Panc1 (cell line): ENCODE measurements at regions of chr11 and their contacts with region 1.

Region 1: DNA sequence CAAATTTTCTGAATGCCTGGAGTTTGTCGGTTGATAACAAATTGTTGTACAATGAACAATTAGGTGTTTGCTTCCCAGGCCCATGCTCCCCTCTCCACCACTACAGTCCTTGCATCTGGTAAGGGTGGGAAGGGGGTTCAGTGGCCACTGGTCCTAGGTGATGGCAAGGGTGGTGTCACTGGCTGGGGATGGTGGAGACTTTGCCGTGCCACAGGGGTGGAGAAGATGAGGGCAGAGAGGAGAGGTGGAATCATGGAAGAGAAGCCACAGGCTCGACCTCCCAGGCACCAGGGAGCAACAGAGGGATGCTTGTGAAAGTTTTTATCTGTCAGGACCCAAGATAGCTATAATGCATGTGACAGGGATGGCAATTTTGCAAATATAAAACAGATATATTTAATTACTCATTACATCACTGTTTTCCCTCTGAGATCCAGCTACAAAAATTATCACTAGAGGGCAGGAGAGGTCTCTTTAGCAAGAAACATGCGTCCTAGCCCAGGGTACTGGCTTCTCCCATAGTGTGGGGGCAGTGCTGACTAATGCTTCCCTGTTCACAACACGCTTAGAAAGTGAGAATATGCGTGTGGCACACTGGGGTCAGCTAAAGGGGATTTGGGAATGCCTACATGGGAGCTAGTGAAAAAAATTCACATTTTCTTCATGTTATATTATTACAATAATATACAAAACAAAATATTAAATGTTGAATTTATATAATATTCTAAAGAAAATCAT is 49.0 kb upstream of the AMPD3 start:
- DNase-seq: peak; percentile 84
- ATAC-seq: peak; percentile 91
- H3K4me3 ChIP-seq: no peak overlapping the region
- H3K27ac ChIP-seq: peak overlapping the region; percentile 4; the same call in 1 of the 2 replicates
- H3K4me1 ChIP-seq: peaks cover 18% of the 10 kb centered on the region
- H3K27me3 ChIP-seq: no peaks in the 10 kb centered on the region
- CTCF ChIP-seq: peak; percentile 96

Region 2: DNA sequence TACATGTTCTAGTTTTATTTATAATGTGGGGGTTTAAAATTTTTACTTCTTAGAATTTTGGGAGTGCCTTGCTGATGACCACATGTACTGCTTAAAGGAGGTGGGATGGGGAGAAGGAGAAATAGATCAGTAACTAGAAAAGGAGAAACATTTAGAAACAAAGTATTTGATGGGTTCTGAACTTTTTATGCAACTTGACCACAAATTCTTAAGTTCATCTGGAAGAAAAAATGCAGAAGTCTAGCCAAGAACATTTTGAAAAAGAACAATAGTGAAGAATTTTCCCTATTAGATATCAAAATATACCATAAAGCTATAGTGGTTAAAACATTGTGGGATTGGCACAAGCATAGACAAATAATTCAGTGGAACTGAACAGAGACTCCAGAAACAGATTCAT is 24.3 kb before region 1 on chr11:
- CTCF ChIA-PET with region 1: no interaction called
- POLR2A ChIA-PET with region 1: interaction called, 13 read pairs
- in situ Hi-C with region 1: no loop called
- intact Hi-C with region 1: no loop called
- DNase-seq: no peak
- ATAC-seq: no peak
- H3K4me3 ChIP-seq: no peak overlapping the region
- H3K27ac ChIP-seq: no peak overlapping the region
- H3K4me1 ChIP-seq: no peaks in the 10 kb centered on the region
- H3K27me3 ChIP-seq: no peaks in the 10 kb centered on the region; the same call in 1 of the 2 replicates
- CTCF ChIP-seq: no peak

Region 3: DNA sequence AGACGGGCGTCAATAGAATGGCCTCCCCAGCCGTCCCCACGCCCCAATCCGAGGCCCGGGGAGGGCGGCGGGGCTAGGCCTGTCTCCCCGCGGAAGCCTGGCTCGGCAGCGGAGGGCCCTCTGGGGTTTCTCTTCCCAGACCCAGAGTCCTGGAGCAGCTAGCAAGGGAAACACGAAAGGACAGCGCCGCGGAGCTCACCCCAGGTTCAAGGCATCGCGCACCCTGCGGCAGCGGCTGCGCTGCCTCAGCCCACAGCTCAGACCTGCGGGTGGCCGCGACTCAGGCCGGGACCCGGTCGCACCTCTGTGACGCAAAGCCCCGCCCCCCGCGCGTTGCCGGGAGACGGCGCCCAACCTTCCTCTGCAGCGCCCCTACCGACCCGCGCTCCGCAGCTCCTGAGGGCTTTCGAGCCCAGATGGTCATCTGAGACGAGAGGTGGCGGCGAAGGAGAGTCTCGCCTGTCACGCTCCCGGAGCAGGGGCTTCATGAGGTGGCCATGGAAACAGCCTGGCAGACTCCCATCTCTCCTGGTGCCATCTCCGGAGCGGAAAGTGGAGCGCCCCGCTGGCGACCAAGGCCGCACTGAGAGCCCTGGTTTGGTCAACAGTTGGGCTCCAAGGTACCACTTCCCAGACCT is 135.0 kb after region 1 on chr11 and contains the start of gene RNF141:
- CTCF ChIA-PET with region 1: interaction called, 5 read pairs
- POLR2A ChIA-PET with region 1: no interaction called
- in situ Hi-C with region 1: no loop called
- intact Hi-C with region 1: loop called (anchors 10 kb)
- DNase-seq: peak; percentile 82
- ATAC-seq: peak; percentile 98
- H3K4me3 ChIP-seq: peak within 1 kb of the TSS; percentile 76 to 88
- H3K27ac ChIP-seq: peak within 1 kb of the TSS; percentile 81
- H3K4me1 ChIP-seq: peaks cover 21% of the 10 kb centered on the region
- H3K27me3 ChIP-seq: no peaks in the 10 kb centered on the region
- CTCF ChIP-seq: peak; percentile 99
- total RNA-seq, gene RNF141: 35.8 TPM

Region 4: GRCh38 chr11:10657308-10658271 is 251.6 kb after region 1 on chr11:
- CTCF ChIA-PET with region 1: no interaction called
- POLR2A ChIA-PET with region 1: no interaction called
- in situ Hi-C with region 1: no loop called
- intact Hi-C with region 1: loop called (anchors 5 kb)
- DNase-seq: no peak
- ATAC-seq: peak; percentile 28
- H3K4me3 ChIP-seq: no peak overlapping the region
- H3K27ac ChIP-seq: peak overlapping the region; percentile 74
- H3K4me1 ChIP-seq: peaks cover 29% of the 10 kb centered on the region
- H3K27me3 ChIP-seq: no peaks in the 10 kb centered on the region
- CTCF ChIP-seq: no peak

Region 5: DNA sequence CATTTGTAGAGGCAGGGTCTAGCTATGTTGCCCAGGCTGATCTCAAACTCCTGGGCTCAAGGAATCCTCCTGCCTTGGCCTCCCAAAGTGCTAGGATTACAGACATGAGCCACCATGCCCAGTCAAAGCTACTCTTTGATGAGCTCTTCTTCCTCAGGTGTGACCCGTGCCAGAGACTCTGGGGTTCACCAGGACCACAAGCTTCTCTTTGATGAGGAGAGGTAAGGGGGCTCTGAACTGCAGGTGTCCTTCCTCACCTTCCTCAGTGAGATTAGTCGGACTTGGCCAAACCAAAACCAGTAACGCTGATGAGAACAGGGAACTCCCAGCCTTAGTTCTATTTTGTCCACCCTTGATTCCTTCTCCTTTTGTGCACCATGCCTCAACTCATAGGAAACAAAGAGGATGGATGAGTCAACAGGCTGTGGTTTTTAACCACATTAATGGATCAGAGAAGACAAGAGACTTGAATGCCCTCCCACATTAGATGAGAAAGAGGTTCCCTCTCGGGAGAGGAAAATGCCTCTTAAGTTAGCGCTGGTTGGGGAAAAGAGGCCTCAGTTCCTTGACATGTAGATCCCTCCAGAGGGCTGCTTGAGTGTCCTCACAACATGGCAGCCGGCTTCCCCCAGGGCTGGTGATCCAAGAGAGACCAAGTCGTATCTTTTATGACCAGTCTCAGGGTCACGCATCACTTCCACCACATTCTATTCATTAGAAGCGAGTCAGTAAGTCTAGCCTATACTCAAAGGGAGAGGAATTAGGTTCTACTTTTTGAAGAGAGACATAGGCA is 319.3 kb after region 1 on chr11:
- CTCF ChIA-PET with region 1: interaction called, 10 read pairs
- POLR2A ChIA-PET with region 1: no interaction called
- in situ Hi-C with region 1: no loop called
- intact Hi-C with region 1: no loop called
- DNase-seq: no peak
- ATAC-seq: no peak
- H3K4me3 ChIP-seq: no peak overlapping the region
- H3K27ac ChIP-seq: no peak overlapping the region
- H3K4me1 ChIP-seq: no peaks in the 10 kb centered on the region
- H3K27me3 ChIP-seq: no peaks in the 10 kb centered on the region
- CTCF ChIP-seq: no peak